Endothelial cell of umbilical vein (primary cell): ENCODE measurements at regions of chr10 and their contacts with region 1.

Region 1: DNA sequence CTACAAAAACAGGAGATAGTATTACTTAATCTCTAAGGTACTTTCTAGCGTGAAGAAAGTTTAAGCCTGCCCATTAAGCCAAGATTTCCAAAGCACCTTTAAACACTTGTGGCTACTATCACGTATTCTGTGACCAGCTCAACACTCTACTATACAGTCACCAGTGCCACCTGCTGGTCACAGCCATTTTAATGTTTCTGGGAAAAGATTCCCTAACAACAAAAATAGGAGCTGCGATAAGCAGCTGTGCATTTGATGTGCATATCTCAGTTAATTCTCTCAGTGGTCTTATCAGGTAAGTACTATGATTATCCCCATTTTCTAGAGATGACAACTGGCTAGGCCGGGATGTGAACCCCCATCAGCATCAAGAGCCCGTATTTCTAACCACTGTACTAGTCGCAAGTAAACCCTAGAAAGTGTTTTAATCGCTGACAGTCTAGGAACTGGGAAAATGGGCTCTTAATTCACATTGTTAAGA is 860 bp downstream of the SEC31B start:
- DNase-seq: peak; percentile 82
- H3K4me3 ChIP-seq: no peak overlapping the region
- H3K27ac ChIP-seq: no peak overlapping the region
- H3K4me1 ChIP-seq: peaks cover 31% of the 10 kb centered on the region
- H3K27me3 ChIP-seq: no peaks in the 10 kb centered on the region
- CTCF ChIP-seq: peak; percentile 58 to 66
- POLR2A ChIP-seq: no peak

Region 2: DNA sequence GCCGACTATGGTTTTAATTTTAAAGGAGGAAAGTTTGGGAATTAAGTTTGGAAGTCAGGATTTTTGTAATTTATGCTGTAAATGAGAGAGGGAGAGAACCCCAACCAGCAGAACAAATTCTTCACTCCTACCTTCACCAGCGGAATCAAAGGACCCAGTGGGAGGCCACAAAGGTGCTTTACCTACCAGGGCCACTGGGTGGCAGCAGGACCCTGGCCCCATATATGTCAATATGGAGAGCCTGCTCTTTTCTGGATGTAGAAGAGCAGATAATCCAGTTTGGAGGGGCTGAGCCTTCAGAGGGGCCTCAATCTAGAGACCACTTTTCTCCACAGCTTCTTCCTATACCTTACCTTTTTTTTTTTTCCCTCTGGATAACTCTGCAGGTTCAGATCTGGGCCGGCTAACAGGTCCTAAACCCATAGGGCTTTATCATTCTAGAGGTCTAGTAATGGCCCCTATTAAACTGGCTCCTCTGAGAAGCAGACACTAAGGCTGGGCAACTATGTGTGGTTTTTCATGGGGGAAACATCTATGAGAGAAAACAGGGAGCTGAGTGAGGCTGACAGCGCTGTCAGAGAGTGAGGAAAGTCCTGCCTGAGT is 180.3 kb before region 1 on chr10:
- CTCF ChIA-PET with region 1: interaction called, 49 read pairs
- POLR2A ChIA-PET with region 1: no interaction called
- dilution Hi-C with region 1: no loop called
- intact Hi-C with region 1: loop called (anchors 1 kb)
- DNase-seq: peak; percentile 63
- H3K4me3 ChIP-seq: no peak overlapping the region
- H3K27ac ChIP-seq: no peak overlapping the region
- H3K4me1 ChIP-seq: no peaks in the 10 kb centered on the region
- H3K27me3 ChIP-seq: peaks cover 7 to 8% of the 10 kb centered on the region in 2 experiments
- CTCF ChIP-seq: peak; percentile 81 to 88
- POLR2A ChIP-seq: no peak

Region 3: GRCh38 chr10:100438674-100439315 is 80.0 kb before region 1 on chr10:
- CTCF ChIA-PET with region 1: interaction called, 36 read pairs
- POLR2A ChIA-PET with region 1: no interaction called
- dilution Hi-C with region 1: no loop called
- intact Hi-C with region 1: loop called (anchors 1 kb)
- DNase-seq: no peak
- H3K4me3 ChIP-seq: no peak overlapping the region
- H3K27ac ChIP-seq: no peak overlapping the region
- H3K4me1 ChIP-seq: no peaks in the 10 kb centered on the region
- H3K27me3 ChIP-seq: peaks cover 2 to 4% of the 10 kb centered on the region in 2 experiments
- CTCF ChIP-seq: no peak
- POLR2A ChIP-seq: no peak

Region 4: DNA sequence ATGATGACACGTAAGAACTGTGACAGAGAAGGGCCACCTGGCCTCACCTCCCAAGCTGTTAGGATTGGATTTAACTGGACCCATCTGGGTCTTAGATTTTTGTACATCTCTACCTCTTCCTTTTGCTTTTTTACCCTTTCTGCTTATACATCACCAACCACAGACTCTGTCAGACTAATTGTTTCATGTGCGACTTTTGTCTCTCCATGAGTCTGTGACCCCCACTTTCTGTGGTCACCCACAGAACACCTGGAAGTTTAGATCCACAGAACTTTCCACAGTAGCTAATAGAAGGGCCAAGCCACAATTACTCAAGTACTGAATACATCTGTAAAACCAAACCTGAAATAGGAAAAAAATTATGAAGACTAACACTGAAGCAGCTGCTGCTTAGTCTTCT is 22.2 kb before region 1 on chr10:
- CTCF ChIA-PET with region 1: interaction called, 22 read pairs
- POLR2A ChIA-PET with region 1: no interaction called
- dilution Hi-C with region 1: no loop called
- intact Hi-C with region 1: no loop called
- DNase-seq: no peak
- H3K4me3 ChIP-seq: no peak overlapping the region
- H3K27ac ChIP-seq: no peak overlapping the region
- H3K4me1 ChIP-seq: no peaks in the 10 kb centered on the region
- H3K27me3 ChIP-seq: no peaks in the 10 kb centered on the region
- CTCF ChIP-seq: no peak
- POLR2A ChIP-seq: no peak

Region 5: GRCh38 chr10:100535715-100536353 is 17.0 kb after region 1 on chr10 and contains the start of gene HIF1AN:
- CTCF ChIA-PET with region 1: interaction called, 48 read pairs
- POLR2A ChIA-PET with region 1: interaction called, 4 read pairs
- dilution Hi-C with region 1: no loop called
- intact Hi-C with region 1: no loop called
- DNase-seq: peak; percentile 93
- H3K4me3 ChIP-seq: peak within 1 kb of the TSS; percentile 37 to 65 (median 65)
- H3K27ac ChIP-seq: peak within 1 kb of the TSS; percentile 18
- H3K4me1 ChIP-seq: peaks cover 17% of the 10 kb centered on the region
- H3K27me3 ChIP-seq: no peaks in the 10 kb centered on the region
- CTCF ChIP-seq: peak; percentile 94 to 97
- POLR2A ChIP-seq: peak; percentile 88
- total RNA-seq, gene HIF1AN: 33.8 and 34.0 TPM in 2 replicates

Region 6: GRCh38 chr10:100600218-100600617 is 81.4 kb after region 1 on chr10:
- CTCF ChIA-PET with region 1: no interaction called
- POLR2A ChIA-PET with region 1: no interaction called
- dilution Hi-C with region 1: no loop called
- intact Hi-C with region 1: no loop called
- DNase-seq: no peak
- H3K4me3 ChIP-seq: no peak overlapping the region
- H3K27ac ChIP-seq: no peak overlapping the region
- H3K4me1 ChIP-seq: no peaks in the 10 kb centered on the region
- H3K27me3 ChIP-seq: peaks cover 2 to 5% of the 10 kb centered on the region in 2 experiments
- CTCF ChIP-seq: no peak
- POLR2A ChIP-seq: no peak